ENCODE measurements at regions of chr16 and their contacts with region 1.

Region 1: GRCh38 chr16:67667817-67668494 is 1.3 kb downstream of the C16orf86 start:
- DNase-seq: peak; percentile 87 to 93
- ATAC-seq: peak; percentile 88 to 90 (median 90)
- H3K4me3 ChIP-seq: peak overlapping the region; percentile 88
- H3K27ac ChIP-seq: peak overlapping the region; percentile 90
- H3K4me1 ChIP-seq: peaks cover 17% of the 10 kb centered on the region
- H3K27me3 ChIP-seq: no peaks in the 10 kb centered on the region
- CTCF ChIP-seq: peak; percentile 81

Region 2: GRCh38 chr16:67546761-67547422 is 121.1 kb before region 1 on chr16:
- intact Hi-C with region 1: loop called in 1 of 2 experiments (anchors 5 kb)
- DNase-seq: peak; percentile 78 to 87
- ATAC-seq: peak; percentile 62 to 81 (median 73)
- H3K4me3 ChIP-seq: no peak overlapping the region
- H3K27ac ChIP-seq: peak overlapping the region; percentile 49
- H3K4me1 ChIP-seq: peaks cover 44% of the 10 kb centered on the region
- H3K27me3 ChIP-seq: no peaks in the 10 kb centered on the region
- CTCF ChIP-seq: peak; percentile 94

Region 3: GRCh38 chr16:67595033-67595355 is 73.0 kb before region 1 on chr16:
- intact Hi-C with region 1: no loop called
- DNase-seq: no peak
- ATAC-seq: peak in 3 of 4 donors; percentile 63 to 74 (median 69)
- H3K4me3 ChIP-seq: no peak overlapping the region
- H3K27ac ChIP-seq: no peak overlapping the region
- H3K4me1 ChIP-seq: peaks cover 13% of the 10 kb centered on the region
- H3K27me3 ChIP-seq: no peaks in the 10 kb centered on the region
- CTCF ChIP-seq: no peak

Region 4: GRCh38 chr16:67608364-67608763 is 59.6 kb before region 1 on chr16:
- intact Hi-C with region 1: no loop called
- DNase-seq: no peak
- ATAC-seq: no peak
- H3K4me3 ChIP-seq: no peak overlapping the region
- H3K27ac ChIP-seq: no peak overlapping the region
- H3K4me1 ChIP-seq: no peaks in the 10 kb centered on the region
- H3K27me3 ChIP-seq: no peaks in the 10 kb centered on the region
- CTCF ChIP-seq: no peak

Region 5: DNA sequence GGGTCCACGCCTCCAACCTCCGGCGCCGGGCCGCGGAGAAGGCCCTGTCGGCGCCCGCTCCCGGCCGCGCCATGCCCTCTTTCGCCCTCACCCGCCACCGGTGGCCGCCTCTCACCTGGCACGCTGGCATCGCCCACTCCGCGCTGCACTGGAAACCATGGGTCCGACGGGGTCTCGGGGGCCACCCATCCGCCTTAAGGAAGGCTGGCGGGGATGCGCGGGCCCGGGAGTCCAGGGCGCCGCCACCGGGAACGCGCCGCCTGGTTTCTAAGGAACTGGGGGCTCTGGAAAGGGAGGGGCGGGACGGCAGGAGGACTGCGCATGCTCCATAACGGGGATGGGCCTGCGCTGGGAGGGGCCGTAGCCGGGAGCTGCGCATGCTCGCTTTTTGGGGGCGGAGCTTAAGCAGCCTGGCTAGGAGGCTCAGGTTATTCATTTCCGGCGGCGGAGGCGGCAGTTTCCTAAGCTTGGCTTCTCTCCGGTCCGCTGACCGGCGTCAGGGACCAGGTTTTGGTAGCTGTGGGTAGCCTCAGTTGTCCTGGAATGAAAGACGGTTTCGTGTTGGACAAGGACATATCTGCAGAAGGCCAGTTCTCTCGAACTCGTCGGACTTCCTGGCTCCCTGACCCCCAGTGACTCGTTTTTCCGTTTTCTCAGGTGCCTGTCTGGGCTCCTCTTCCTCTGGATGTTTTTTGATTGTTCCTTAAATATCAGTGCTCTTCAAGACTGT is 51.3 kb after region 1 on chr16 and contains the start of gene GFOD2:
- intact Hi-C with region 1: loop called (anchors 5 kb)
- DNase-seq: peak; percentile 96 to 99
- ATAC-seq: peak; percentile 97 to 99 (median 98)
- H3K4me3 ChIP-seq: peak within 1 kb of the TSS; percentile 99
- H3K27ac ChIP-seq: peak within 1 kb of the TSS; percentile 96
- H3K4me1 ChIP-seq: peaks cover 22% of the 10 kb centered on the region
- H3K27me3 ChIP-seq: no peaks in the 10 kb centered on the region
- CTCF ChIP-seq: no peak
- total RNA-seq, gene GFOD2: 8.0 to 11.3 (median 9.0) TPM